ENCODE measurements at regions of chr14 and their contacts with region 1.

Region 1: DNA sequence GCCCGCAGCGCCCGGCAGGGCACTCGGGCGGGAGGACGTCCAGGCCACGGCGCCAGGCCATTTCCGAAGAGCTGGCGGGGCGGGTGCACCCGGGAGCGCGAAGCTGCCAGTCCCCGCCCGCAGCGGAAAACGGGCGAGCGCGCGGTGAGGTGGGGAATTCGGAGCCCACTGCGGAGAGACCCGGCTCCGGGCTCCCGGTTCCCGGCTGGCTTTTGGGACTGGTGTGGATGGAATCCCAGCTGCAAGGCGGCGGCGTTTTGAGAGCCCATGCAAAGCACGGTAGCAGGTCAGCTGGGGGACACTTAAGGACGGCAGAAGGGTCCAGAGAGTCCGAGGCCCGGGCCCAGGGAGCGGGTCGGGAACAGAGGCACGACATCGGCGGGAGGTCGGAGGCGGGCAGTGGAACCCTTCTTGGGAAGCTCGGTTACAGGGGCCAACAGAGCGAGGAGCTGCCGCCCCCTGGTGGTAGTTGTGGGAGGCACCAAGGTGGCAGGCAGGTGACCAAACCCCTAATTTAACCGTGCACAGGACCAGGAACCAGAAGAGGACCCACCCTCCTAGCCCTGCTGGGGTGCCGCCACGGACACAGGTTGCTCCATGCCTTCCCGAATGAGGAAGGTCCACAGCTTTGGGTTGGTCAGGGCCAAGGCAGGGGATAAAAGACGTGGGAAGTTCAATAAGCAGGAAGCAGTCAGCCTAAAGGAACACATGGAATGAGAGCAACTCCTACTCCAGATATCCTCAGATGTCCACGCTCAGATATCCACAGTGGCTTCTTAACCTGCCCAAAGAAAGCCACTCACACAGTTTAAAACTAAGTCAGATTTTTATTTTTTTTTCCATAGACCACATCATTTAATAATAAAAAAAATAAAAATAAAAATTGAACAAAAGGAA is 685 bp upstream of the CDH24 start:
- DNase-seq: peak; percentile 87 to 89
- ATAC-seq: peak; percentile 67 to 79
- H3K4me3 ChIP-seq: peak overlapping the region; percentile 71
- H3K27ac ChIP-seq: peak overlapping the region; percentile 76 to 89
- H3K4me1 ChIP-seq: peaks cover 41% of the 10 kb centered on the region
- CTCF ChIP-seq: peak; percentile 82
- EP300 ChIP-seq: no peak
- POLR2A ChIP-seq: no peak
- RAD21 ChIP-seq: peak; percentile 79 to 81

Region 2: GRCh38 chr14:22955702-22956569 is 102.1 kb before region 1 on chr14:
- CTCF ChIA-PET with region 1: interaction called, 12 read pairs
- POLR2A ChIA-PET with region 1: interaction called, 6 read pairs
- DNase-seq: no peak
- ATAC-seq: no peak
- H3K4me3 ChIP-seq: peak overlapping the region; percentile 47
- H3K27ac ChIP-seq: peak overlapping the region; percentile 88 to 97
- H3K4me1 ChIP-seq: peaks cover 14% of the 10 kb centered on the region
- CTCF ChIP-seq: no peak
- EP300 ChIP-seq: no peak
- POLR2A ChIP-seq: no peak
- RAD21 ChIP-seq: no peak

Region 3: DNA sequence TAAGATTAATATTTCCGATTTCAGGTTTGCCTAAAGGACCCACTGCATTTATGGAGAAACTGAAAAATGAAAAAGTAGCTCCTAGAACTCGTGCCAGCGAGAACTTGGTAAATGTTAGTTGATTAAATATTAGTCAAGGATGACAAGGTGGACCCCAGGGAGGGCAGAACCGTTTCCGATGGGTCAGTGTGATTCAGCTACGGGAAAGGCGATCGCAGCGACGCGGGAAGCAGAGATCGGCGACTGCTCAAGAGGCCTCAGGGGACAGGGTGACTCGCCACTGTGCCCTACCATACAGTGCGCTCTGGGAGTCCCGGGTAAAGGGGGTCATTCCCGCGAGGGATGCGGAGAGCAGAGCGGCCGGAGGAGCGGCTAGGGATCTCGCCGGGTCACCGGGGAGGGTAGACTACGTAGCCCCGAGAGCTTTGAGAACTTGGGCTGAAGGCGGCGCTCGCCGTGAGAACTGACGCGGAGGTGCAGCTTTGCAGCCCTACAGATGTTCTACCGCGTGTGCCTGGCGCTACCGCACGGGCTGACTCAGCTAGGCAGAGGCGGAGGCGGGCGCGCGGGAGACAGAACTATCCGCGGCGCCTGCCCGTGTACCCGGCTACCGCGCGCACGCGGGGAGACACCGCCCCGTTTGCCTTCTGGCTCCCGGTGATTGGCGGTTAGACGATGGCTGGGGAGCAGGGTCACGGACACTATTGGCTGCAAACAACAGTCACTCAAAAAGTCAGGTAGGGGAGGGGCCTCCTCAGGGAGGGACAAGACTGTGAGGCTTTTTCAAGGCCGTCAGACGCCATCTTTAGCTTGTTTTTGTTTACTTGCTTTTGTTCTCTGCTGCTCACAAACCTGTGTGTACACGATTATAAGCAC is 51.2 kb before region 1 on chr14:
- CTCF ChIA-PET with region 1: interaction called, 1,206 read pairs
- POLR2A ChIA-PET with region 1: interaction called, 13 read pairs
- DNase-seq: peak; percentile 97 to 99
- ATAC-seq: peak; percentile 96 to 98
- H3K4me3 ChIP-seq: peak overlapping the region; percentile 60
- H3K27ac ChIP-seq: peak overlapping the region; percentile 93
- H3K4me1 ChIP-seq: peaks cover 27% of the 10 kb centered on the region
- CTCF ChIP-seq: peak; percentile 35; the same call in 2 of the 3 replicates
- EP300 ChIP-seq: no peak
- POLR2A ChIP-seq: peak; percentile 81
- RAD21 ChIP-seq: 0 out of 5 replicates have a peak, but pooled peaks of 1 of the 2 experiments have one; percentile 11

Region 4: DNA sequence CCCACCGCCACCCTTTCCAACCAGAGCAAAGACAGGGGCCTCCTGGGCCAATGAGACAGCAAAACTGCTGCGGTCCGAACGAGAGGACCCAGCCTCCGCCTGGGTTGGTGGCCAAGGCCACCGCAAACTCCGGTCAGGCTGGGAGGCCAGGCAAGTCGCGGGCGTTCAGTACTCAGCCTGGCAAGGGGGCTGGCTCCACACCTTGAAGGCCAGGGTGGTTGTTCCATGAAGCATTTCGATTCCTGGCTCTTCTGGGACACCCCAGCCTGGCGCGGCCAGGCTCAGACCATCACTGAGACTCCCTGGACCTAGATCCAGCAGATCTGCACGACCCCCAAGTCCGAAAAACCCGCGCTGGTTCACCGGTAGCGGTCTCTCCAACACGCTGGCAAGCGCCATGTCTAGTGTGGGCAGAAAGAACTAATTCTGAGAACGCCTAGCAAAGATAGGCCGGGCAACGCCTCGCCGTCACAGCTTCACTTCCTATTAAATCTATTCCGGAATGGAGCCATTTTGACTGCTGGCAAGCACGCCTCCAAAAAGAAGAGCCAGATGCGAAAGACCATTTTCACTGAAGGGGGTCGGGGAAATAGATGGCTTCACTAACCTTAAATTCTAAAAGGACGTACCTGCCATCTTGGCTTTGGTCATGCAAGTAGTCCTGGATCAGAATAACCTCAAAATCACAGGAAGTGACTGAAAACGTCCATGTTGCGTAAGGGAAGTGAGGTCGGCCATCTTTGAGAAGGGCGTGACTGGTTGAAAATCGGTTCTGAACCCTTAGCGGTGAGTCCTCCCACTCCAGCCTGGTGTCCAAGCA is 23.3 kb before region 1 on chr14 and contains the start of gene PSMB5:
- CTCF ChIA-PET with region 1: interaction called, 36 read pairs
- POLR2A ChIA-PET with region 1: no interaction called
- DNase-seq: peak; percentile 98
- ATAC-seq: peak; percentile 97 to 99
- H3K4me3 ChIP-seq: peak within 1 kb of the TSS; percentile 76
- H3K27ac ChIP-seq: peak within 1 kb of the TSS; percentile 89 to 97
- H3K4me1 ChIP-seq: peaks cover 13% of the 10 kb centered on the region
- CTCF ChIP-seq: no peak
- EP300 ChIP-seq: no peak
- POLR2A ChIP-seq: peak; percentile 80
- RAD21 ChIP-seq: no peak
- polyA plus RNA-seq, gene PSMB5: 283 and 337 TPM in 2 replicates

Region 5: GRCh38 chr14:23068476-23069412 is 10.7 kb after region 1 on chr14:
- CTCF ChIA-PET with region 1: interaction called, 64 read pairs
- POLR2A ChIA-PET with region 1: interaction called, 14 read pairs
- DNase-seq: peak; percentile 94 to 95
- ATAC-seq: peak; percentile 72 to 86
- H3K4me3 ChIP-seq: no peak overlapping the region
- H3K27ac ChIP-seq: peak overlapping the region in 1 of 2 experiments; percentile 34; a peak in 2 of 6 replicates
- H3K4me1 ChIP-seq: peaks cover 32% of the 10 kb centered on the region
- CTCF ChIP-seq: peak; percentile 99
- EP300 ChIP-seq: no peak
- POLR2A ChIP-seq: no peak
- RAD21 ChIP-seq: peak; percentile 79

Region 6: GRCh38 chr14:23114669-23115491 is 56.9 kb after region 1 on chr14:
- CTCF ChIA-PET with region 1: interaction called, 17 read pairs
- POLR2A ChIA-PET with region 1: no interaction called
- DNase-seq: peak; percentile 79 to 80
- ATAC-seq: peak; percentile 80 to 88
- H3K4me3 ChIP-seq: no peak overlapping the region
- H3K27ac ChIP-seq: peak overlapping the region; percentile 47 to 75; a peak in 5 of 6 replicates
- H3K4me1 ChIP-seq: peaks cover 22% of the 10 kb centered on the region
- CTCF ChIP-seq: no peak
- EP300 ChIP-seq: no peak
- POLR2A ChIP-seq: no peak
- RAD21 ChIP-seq: no peak